GM13976 (cell line): ENCODE measurements at regions of chr2 and their contacts with region 1.

Region 1: DNA sequence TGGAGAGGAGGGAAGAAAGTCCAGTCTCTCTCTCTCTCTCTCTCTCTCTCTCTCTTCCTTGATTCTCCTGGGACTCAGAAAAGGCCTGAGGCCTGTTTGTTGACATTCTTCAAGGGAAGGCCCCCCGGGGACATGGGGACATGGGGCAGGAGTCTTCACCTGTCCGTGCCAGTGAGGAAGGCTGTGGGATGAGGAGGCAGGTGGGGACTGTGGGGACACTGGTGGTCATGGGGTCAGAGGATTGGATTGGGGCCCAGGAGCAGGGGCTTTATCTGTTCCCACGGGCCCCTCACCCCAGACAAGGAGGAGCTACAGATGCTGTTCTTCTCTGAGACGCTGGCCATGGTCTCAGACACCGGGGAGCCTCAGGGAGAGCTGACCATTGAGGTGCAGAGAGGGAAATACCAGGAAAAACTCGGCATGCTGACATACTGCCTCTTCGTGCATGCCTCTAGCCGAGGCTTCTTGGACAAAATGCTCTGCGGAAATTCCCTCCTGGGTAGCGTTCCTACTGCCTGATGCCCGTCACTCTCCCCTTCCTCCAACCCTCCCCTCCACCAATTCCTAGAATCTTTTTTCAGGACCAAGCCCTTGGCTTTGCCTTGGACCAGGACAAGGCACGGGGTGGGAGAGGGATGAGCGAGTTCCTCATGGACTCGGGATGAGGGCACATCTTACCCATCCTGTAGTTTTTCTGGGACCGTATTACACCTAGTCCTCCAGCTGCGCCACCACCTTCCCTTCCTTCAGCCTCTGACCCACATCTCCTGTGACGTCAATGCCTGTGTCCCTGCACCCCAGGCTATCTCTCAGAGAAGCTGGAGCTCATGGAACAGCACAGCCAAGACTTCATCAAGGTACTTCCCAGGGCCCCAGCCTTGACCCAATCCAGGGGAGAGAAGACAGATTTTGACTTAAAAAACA is 841 bp downstream of the CATIP start:
- DNase-seq: peak; percentile 13
- CTCF ChIP-seq: no peak

Region 2: DNA sequence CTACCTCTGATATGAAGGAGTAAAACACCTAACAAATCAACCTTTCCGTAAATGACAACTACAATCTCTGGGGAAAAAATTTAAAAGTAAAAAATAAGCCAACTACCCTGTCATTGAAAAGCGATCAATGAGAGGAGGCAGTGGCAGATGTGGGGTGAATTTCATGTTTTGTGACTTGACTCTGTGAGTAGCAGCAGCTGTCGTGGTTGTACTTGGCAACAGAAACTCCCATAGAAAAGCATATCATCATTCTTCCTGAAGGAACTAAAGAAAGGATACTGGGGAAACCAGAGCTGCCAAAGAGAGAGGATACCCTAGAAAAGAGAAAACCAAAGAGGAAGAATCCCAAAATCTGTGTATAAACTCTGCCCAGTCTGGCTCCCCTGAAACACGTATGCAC is 591.1 kb before region 1 on chr2:
- in situ Hi-C with region 1: no loop called
- DNase-seq: no peak
- CTCF ChIP-seq: no peak

Region 3: GRCh38 chr2:218301176-218301819 is 56.2 kb before region 1 on chr2:
- in situ Hi-C with region 1: loop called (anchors 10 kb)
- DNase-seq: peak; percentile 76
- CTCF ChIP-seq: peak; percentile 88

Region 4: GRCh38 chr2:218536804-218537494 is 179.5 kb after region 1 on chr2:
- in situ Hi-C with region 1: no loop called
- DNase-seq: no peak
- CTCF ChIP-seq: no peak